ENCODE measurements at regions of chr1 and their contacts with region 1.

Region 1: DNA sequence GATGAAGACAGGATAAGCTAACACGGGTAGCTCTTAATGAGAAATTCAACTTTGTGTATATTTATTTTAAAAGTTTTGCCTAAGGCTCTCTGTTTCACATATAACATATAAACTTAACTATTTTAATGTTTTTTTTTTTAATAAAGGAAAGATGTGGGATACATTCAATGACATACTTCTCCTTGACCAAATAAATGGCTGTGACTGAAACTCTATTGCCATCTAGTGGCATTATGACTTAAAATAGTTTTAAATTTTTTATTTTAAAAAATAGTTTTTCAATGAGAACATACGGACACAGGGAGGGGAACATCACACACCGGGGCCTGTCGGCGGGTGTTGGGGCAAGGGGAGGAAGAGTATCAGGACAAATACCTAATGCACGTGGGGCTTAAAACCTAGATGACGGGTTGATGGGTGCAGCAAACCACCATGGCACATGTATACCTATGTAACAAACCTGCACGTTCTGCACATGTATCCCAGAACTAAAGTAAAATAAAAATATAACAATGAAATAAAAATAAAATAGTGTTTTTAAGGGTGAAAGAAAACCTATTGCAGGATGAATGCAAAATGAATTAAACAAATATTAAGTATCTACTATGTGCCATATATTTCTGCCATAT is 83.4 kb downstream of the LYST start:
- DNase-seq: peak; percentile 27
- H3K4me3 ChIP-seq: no peak overlapping the region
- H3K27ac ChIP-seq: peak overlapping the region in 1 of 2 experiments; percentile 48; a peak in 1 of 4 replicates
- H3K4me1 ChIP-seq: peaks cover 4 to 5% of the 10 kb centered on the region in 2 experiments; a peak in 2 of 4 replicates
- H3K27me3 ChIP-seq: no peaks in the 10 kb centered on the region
- CTCF ChIP-seq: peak; percentile 63
- EP300 ChIP-seq: no peak
- RAD21 ChIP-seq: peak; percentile 82

Region 2: GRCh38 chr1:235504496-235505222 is 278.6 kb before region 1 on chr1:
- CTCF ChIA-PET with region 1: interaction called, 13 read pairs
- POLR2A ChIA-PET with region 1: no interaction called
- DNase-seq: peak; percentile 97
- H3K4me3 ChIP-seq: peak overlapping the region; percentile 60 to 76
- H3K27ac ChIP-seq: peak overlapping the region; percentile 97 to 98
- H3K4me1 ChIP-seq: peaks cover 5 to 13% of the 10 kb centered on the region in 2 experiments; a peak in 3 of 4 replicates
- H3K27me3 ChIP-seq: no peaks in the 10 kb centered on the region
- CTCF ChIP-seq: peak; percentile 75
- EP300 ChIP-seq: 0 out of 4 replicates have a peak, but pooled peaks have one; percentile 17
- RAD21 ChIP-seq: peak; percentile 42

Region 3: GRCh38 chr1:235767795-235768194 is 15.5 kb before region 1 on chr1:
- CTCF ChIA-PET with region 1: interaction called, 19 read pairs
- POLR2A ChIA-PET with region 1: no interaction called
- DNase-seq: no peak
- H3K4me3 ChIP-seq: no peak overlapping the region
- H3K27ac ChIP-seq: no peak overlapping the region
- H3K4me1 ChIP-seq: no peaks in the 10 kb centered on the region; a peak in 1 of 4 replicates
- H3K27me3 ChIP-seq: no peaks in the 10 kb centered on the region
- CTCF ChIP-seq: no peak
- EP300 ChIP-seq: no peak
- RAD21 ChIP-seq: no peak

Measured in SK-N-SH (cell line).